HepG2 (cell line): ENCODE measurements at regions of chr6 and their contacts with region 1.

Region 1: GRCh38 chr6:129717277-129717676 is 7.3 kb upstream of the ARHGAP18 start:
- DNase-seq: peak; percentile 99
- ATAC-seq: peak; percentile 98
- H3K4me3 ChIP-seq: peak overlapping the region in 2 of 3 experiments; percentile 2 to 29; a peak in 3 of 6 replicates
- H3K27ac ChIP-seq: peak overlapping the region; percentile 63
- H3K4me1 ChIP-seq: peaks cover 38% of the 10 kb centered on the region
- H3K27me3 ChIP-seq: no peaks in the 10 kb centered on the region
- CTCF ChIP-seq: no peak
- EP300 ChIP-seq: peak; percentile 64 to 93; a peak in 3 of 4 replicates
- POLR2A ChIP-seq: no peak
- RAD21 ChIP-seq: peak; percentile 25; the same call in 1 of the 2 replicates

Region 2: DNA sequence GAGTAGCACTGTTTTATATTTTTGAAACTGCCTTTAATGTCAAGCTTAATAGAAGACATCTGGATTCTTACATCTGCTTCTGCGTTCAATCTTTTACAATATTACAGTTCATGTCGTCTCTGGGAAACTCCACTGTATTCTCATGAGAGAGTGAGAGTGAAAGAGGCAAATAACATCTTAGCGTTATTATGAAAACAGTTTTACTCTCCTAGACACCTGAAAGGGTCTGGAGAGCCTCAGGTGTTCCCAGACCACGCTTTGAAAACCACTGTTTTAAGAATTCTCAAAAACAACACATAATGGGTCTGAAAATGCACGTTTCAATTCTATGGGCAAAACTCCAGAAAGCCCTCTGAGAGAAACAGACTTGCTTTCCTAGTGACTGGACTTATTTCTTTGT is 70.6 kb before region 1 on chr6:
- CTCF ChIA-PET with region 1: no interaction called
- POLR2A ChIA-PET with region 1: interaction called, 4 read pairs
- in situ Hi-C with region 1: no loop called
- intact Hi-C with region 1: loop called (anchors 2 kb)
- DNase-seq: no peak
- ATAC-seq: no peak
- H3K4me3 ChIP-seq: no peak overlapping the region
- H3K27ac ChIP-seq: peak overlapping the region; percentile 68
- H3K4me1 ChIP-seq: peaks cover 91% of the 10 kb centered on the region
- H3K27me3 ChIP-seq: no peaks in the 10 kb centered on the region
- CTCF ChIP-seq: no peak
- EP300 ChIP-seq: no peak
- POLR2A ChIP-seq: no peak
- RAD21 ChIP-seq: no peak

Region 3: GRCh38 chr6:129683601-129684322 is 33.5 kb before region 1 on chr6:
- CTCF ChIA-PET with region 1: no interaction called
- POLR2A ChIA-PET with region 1: interaction called, 5 read pairs
- in situ Hi-C with region 1: no loop called
- intact Hi-C with region 1: loop called (anchors 1 kb)
- DNase-seq: peak; percentile 96
- ATAC-seq: peak; percentile 87
- H3K4me3 ChIP-seq: no peak overlapping the region; a peak in 1 of 6 replicates
- H3K27ac ChIP-seq: peak overlapping the region; percentile 70
- H3K4me1 ChIP-seq: peaks cover 97% of the 10 kb centered on the region
- H3K27me3 ChIP-seq: no peaks in the 10 kb centered on the region
- CTCF ChIP-seq: no peak
- EP300 ChIP-seq: peak in 1 of 2 experiments; percentile 67; a peak in 3 of 4 replicates
- POLR2A ChIP-seq: peak; percentile 31 to 58; a peak in 1 of 4 replicates
- RAD21 ChIP-seq: no peak

Region 4: DNA sequence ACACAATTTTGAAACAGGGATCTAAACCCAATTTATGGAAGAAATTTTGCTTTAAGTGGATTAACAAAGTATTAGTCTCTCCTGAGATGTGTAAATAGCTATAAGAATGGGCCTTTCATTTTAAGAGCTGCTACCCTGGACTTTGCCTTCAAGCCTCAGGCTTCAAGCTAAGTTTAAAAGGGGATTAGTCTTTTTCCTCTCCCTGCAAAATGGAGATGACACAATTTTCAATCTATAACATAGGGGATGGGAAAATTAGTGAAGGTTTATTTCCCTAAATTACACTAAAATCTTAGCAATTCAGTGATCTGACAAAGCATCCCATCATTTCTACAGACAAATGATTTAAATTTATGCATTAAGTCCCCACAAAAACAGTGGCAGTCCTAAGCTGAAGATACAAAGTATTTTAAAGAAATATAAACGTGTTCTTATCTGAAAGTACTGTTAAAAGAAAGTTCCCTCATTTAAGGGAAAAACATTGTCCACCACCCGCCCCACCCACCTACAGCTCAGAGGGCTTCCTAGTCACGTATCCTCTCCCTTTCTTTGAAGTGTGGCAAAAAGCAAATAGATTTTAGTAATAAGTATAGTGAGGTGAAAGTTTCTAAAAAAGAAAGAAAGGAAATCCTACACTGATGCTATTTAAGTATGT is 21.8 kb before region 1 on chr6:
- CTCF ChIA-PET with region 1: no interaction called
- POLR2A ChIA-PET with region 1: interaction called, 14 read pairs
- in situ Hi-C with region 1: no loop called
- intact Hi-C with region 1: no loop called
- DNase-seq: peak; percentile 92
- ATAC-seq: peak; percentile 87
- H3K4me3 ChIP-seq: peak overlapping the region; percentile 30 to 57 (median 43); a peak in 5 of 6 replicates
- H3K27ac ChIP-seq: peak overlapping the region; percentile 89
- H3K4me1 ChIP-seq: peaks cover 100% of the 10 kb centered on the region
- H3K27me3 ChIP-seq: no peaks in the 10 kb centered on the region
- CTCF ChIP-seq: no peak
- EP300 ChIP-seq: peak; percentile 50 to 95; a peak in 2 of 4 replicates
- POLR2A ChIP-seq: no peak
- RAD21 ChIP-seq: 0 out of 2 replicates have a peak, but pooled peaks have one; percentile 20

Region 5: DNA sequence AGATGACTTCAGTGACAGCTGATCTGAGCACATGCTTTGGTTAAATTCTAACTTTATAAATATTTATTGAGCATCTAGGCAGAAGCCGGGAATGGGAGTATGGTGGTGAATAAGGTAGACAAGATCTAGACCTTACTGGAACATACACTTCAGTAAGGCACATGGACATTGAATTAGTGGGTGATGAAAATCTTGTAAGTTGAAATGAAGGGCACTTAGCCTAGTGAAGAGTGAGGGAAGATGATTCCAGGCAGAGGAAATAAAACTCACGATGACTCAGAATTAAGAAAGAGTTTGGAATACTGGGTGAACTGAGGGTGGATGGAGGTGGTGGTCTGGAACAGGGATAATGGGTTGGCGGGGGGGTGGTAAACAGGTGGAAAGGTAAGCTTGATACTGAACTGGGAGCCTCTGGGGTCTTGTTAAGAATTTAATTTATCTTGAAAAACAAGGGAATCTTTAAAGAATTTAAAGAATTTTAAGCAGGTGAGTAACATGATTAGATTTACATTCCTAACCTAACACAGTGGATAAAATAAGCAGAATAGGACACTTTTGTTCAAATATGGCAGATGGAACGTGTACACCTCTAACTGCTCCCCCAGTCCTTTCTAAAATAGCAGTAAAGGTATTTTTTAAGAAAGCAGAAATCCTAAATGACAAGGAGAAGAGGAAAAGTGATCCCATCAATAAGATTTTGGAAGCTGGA is 67.9 kb after region 1 on chr6:
- CTCF ChIA-PET with region 1: no interaction called
- POLR2A ChIA-PET with region 1: no interaction called
- in situ Hi-C with region 1: no loop called
- intact Hi-C with region 1: no loop called
- DNase-seq: no peak
- ATAC-seq: no peak
- H3K4me3 ChIP-seq: no peak overlapping the region
- H3K27ac ChIP-seq: no peak overlapping the region
- H3K4me1 ChIP-seq: no peaks in the 10 kb centered on the region
- H3K27me3 ChIP-seq: peaks cover 0 to 6% of the 10 kb centered on the region in 2 experiments; a peak in 1 of 5 replicates
- CTCF ChIP-seq: no peak
- EP300 ChIP-seq: no peak
- POLR2A ChIP-seq: no peak
- RAD21 ChIP-seq: no peak